Activated CD4-positive, alpha-beta T cell treated with anti-CD3 and anti-CD28 coated beads, Interleukin-2, amount 10 ng/mL, durations not matched to agents 24 days and 14 days (primary cell): ENCODE measurements at regions of chr17 and their contacts with region 1.

Region 1: DNA sequence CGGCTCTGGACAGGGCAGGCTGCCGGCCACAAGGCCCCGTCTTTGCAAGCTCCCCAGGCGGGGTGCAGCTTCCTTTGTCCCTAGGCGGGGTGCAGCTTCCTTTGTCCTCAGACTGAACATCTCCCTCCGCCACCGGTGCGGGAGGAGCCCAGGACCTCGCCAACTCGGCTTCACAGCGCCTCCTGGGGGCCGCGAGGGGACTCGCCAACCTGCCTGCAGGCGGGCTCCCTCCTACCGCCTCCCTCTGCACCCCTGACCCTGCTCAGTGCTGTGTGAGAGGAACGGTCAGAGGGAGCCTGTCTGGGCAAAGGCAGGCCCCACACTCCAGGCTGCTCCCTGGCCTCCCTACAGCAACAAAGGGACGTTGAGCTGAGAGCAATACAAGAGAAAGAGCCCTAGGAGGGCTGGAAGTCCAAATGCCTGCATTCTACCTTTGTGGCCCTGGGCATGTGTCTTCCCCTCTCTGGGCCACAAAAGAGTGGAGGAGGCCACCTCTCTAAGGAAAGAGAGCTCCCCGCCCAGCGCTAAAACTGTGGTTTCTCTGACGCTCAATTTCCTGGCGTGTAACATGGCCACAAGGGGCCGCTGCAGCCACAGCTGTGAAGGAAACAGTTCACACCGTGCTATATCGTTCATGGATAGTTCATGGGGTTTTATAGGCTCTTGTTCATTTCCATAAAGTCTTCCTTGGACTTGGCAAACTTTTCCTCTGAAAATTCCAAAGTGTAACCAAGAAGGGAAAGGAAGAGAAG is 20.9 kb upstream of the KRT19 start:
- DNase-seq: peak; percentile 95
- H3K4me3 Mint-ChIP-seq: peak overlapping the region; percentile 66
- H3K27ac Mint-ChIP-seq: peak overlapping the region; percentile 82
- H3K4me1 Mint-ChIP-seq: peaks cover 19% of the 10 kb centered on the region
- H3K27me3 Mint-ChIP-seq: peaks cover 13% of the 10 kb centered on the region

Region 2: GRCh38 chr17:40803617-40804082 is 745.4 kb before region 1 on chr17:
- intact Hi-C with region 1: loop called (anchors 10 kb)
- DNase-seq: peak; percentile 91
- H3K4me3 Mint-ChIP-seq: no peak overlapping the region
- H3K27ac Mint-ChIP-seq: no peak overlapping the region
- H3K4me1 Mint-ChIP-seq: peaks cover 2% of the 10 kb centered on the region
- H3K27me3 Mint-ChIP-seq: peaks cover 44% of the 10 kb centered on the region

Region 3: GRCh38 chr17:40909351-40909750 is 639.7 kb before region 1 on chr17:
- intact Hi-C with region 1: loop called (anchors 2 kb)
- DNase-seq: peak; percentile 85
- H3K4me3 Mint-ChIP-seq: no peak overlapping the region
- H3K27ac Mint-ChIP-seq: no peak overlapping the region
- H3K4me1 Mint-ChIP-seq: no peaks in the 10 kb centered on the region
- H3K27me3 Mint-ChIP-seq: peaks cover 27% of the 10 kb centered on the region

Region 4: DNA sequence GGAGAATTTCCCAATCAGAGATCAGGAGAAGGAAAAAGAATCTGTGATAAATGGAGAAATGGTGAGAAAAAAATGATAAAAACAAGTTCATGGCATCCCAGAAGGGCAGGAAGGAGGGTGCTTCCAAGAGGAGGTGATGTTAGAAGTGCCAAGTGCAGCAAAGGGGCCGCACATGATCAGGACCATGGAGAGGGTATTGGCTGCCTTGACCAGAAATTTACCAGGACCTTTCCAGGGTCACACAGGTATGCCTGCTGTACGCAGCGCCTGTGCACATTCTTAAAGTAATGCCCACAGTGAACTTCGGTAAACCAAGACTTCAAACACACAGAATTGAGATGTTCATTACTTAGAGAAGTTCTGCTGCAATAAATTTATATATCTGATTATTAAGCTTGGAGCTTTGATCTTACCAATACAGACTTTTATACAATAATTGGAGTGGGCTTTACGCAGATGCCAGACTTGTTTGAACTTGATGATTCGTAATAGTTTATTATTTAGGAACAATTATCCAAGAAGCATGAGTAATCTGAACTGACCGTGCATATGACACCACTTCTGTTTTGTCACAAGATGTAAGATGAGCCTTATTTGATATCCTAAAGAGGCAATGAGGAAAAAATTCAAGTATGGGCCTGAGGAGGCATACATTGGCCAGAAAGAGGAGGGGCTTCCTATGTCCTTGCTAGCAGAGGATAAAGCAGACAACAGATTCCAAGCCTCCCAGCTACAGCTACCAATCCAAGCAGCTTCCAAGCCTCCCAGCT is 196.2 kb before region 1 on chr17:
- intact Hi-C with region 1: no loop called
- DNase-seq: no peak
- H3K4me3 Mint-ChIP-seq: no peak overlapping the region
- H3K27ac Mint-ChIP-seq: no peak overlapping the region
- H3K4me1 Mint-ChIP-seq: peaks cover 2% of the 10 kb centered on the region
- H3K27me3 Mint-ChIP-seq: peaks cover 34% of the 10 kb centered on the region

Region 5: GRCh38 chr17:41403798-41404671 is 145.0 kb before region 1 on chr17:
- intact Hi-C with region 1: loop called (anchors 5 kb)
- DNase-seq: peak; percentile 72
- H3K4me3 Mint-ChIP-seq: peak overlapping the region; percentile 59
- H3K27ac Mint-ChIP-seq: peak overlapping the region; percentile 84
- H3K4me1 Mint-ChIP-seq: peaks cover 25% of the 10 kb centered on the region
- H3K27me3 Mint-ChIP-seq: no peaks in the 10 kb centered on the region

Region 6: DNA sequence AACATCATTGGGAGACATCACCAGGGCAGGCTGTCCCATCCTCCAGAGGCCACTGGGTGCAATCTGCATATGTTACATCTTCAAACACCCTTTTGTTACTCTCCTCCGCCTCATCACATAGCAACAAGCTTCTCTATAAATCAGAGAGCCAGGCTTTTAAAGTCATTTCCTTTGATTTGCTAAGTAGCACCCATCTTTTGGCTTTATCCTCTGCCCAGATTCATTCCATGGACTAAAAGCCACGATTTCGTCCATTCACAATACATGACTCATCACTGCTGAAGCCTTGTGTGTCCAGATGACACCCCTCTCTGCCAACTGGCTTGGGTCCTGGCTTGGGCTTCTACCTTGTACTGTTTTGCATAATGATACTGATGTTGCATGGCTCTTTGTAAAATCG is 106.3 kb before region 1 on chr17:
- intact Hi-C with region 1: no loop called
- DNase-seq: no peak
- H3K4me3 Mint-ChIP-seq: no peak overlapping the region
- H3K27ac Mint-ChIP-seq: no peak overlapping the region
- H3K4me1 Mint-ChIP-seq: peaks cover 1% of the 10 kb centered on the region
- H3K27me3 Mint-ChIP-seq: peaks cover 12% of the 10 kb centered on the region

Region 7: GRCh38 chr17:41579484-41580243 is 30.6 kb after region 1 on chr17:
- intact Hi-C with region 1: loop called (anchors 2 kb)
- DNase-seq: peak; percentile 94
- H3K4me3 Mint-ChIP-seq: no peak overlapping the region
- H3K27ac Mint-ChIP-seq: no peak overlapping the region
- H3K4me1 Mint-ChIP-seq: peaks cover 3% of the 10 kb centered on the region
- H3K27me3 Mint-ChIP-seq: peaks cover 20% of the 10 kb centered on the region

Region 8: GRCh38 chr17:41593311-41593981 is 44.4 kb after region 1 on chr17:
- intact Hi-C with region 1: no loop called
- DNase-seq: no peak
- H3K4me3 Mint-ChIP-seq: no peak overlapping the region
- H3K27ac Mint-ChIP-seq: no peak overlapping the region
- H3K4me1 Mint-ChIP-seq: no peaks in the 10 kb centered on the region
- H3K27me3 Mint-ChIP-seq: peaks cover 6% of the 10 kb centered on the region

Region 9: GRCh38 chr17:41624208-41625101 is 75.4 kb after region 1 on chr17 and contains the start of gene KRT17:
- intact Hi-C with region 1: no loop called
- DNase-seq: no peak
- H3K4me3 Mint-ChIP-seq: no peak within 1 kb of the TSS
- H3K27ac Mint-ChIP-seq: no peak within 1 kb of the TSS
- H3K4me1 Mint-ChIP-seq: no peaks in the 10 kb centered on the region
- H3K27me3 Mint-ChIP-seq: no peaks in the 10 kb centered on the region
- total RNA-seq, gene KRT17: not detected in 2 replicates

Region 10: GRCh38 chr17:41648411-41649195 is 99.6 kb after region 1 on chr17:
- intact Hi-C with region 1: loop called (anchors 1 kb)
- DNase-seq: peak; percentile 96
- H3K4me3 Mint-ChIP-seq: peak overlapping the region; percentile 76
- H3K27ac Mint-ChIP-seq: peak overlapping the region; percentile 23
- H3K4me1 Mint-ChIP-seq: peaks cover 7% of the 10 kb centered on the region
- H3K27me3 Mint-ChIP-seq: peaks cover 1% of the 10 kb centered on the region